ENCODE measurements at regions of chr6 and their contacts with region 1.

Region 1: DNA sequence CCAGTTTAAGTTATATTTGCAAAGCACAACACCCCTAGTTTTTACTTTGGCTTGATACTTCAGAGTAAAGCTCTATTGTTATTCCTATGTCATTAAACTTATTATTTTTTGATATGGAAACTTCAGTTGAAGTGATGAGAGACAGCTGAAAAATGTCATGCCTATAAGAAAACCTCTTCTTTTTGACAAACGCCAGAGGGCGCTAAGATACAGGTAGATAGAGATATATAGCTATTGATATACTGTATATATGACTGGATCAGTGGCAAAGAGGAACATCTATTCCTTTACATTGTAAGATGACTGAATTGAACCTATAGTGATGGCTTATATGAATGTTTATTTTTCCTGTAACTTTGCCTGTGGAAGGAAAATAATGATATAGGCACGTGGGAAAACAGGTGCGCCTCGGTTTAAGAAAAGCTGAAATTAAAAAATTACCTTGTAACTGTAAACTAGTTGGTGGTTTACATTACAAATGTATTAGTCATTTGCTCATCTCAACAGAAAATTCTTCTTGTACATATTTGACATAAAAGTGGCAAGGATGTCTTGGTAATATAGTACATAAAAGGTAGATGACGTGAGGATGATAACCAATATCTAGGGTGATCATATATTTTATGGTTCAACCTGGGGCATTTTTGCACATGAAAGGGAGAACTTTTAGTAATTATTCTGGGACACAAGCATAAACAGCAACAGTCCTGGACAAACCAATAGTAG is 74.1 kb downstream of the LAMA4 start:
- DNase-seq: peak; percentile 61

Region 2: GRCh38 chr6:112269114-112269513 is 88.9 kb after region 1 on chr6:
- CTCF ChIA-PET with region 1: interaction called, 17 read pairs
- POLR2A ChIA-PET with region 1: no interaction called
- DNase-seq: peak; percentile 30

Region 3: DNA sequence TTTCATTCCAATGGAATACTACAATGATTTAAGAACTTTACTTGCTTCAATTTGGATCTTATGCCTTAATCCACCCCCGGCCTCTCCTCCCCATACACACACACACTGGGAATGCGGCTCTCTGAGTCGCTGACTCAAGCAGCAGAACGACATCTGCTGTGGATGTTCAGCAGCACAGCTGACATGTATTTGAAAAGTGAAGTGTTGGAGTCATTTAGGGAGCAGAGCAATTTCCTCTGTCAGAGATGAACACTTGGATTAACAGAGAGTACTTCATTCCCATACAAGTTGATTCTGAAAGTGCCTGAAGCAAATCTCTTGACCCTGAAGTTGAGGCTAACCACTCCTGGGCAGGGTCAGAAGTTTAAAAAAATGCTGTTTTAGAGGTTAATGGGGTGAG is 102.0 kb after region 1 on chr6:
- CTCF ChIA-PET with region 1: interaction called, 12 read pairs
- POLR2A ChIA-PET with region 1: no interaction called
- DNase-seq: peak; percentile 65

Region 4: GRCh38 chr6:112311950-112312547 is 131.8 kb after region 1 on chr6:
- CTCF ChIA-PET with region 1: interaction called, 32 read pairs
- POLR2A ChIA-PET with region 1: no interaction called
- DNase-seq: peak; percentile 63

Measured in HEK293T (cell line).